MCF 10A (cell line): ENCODE measurements at regions of chr7 and their contacts with region 1.

Region 1: DNA sequence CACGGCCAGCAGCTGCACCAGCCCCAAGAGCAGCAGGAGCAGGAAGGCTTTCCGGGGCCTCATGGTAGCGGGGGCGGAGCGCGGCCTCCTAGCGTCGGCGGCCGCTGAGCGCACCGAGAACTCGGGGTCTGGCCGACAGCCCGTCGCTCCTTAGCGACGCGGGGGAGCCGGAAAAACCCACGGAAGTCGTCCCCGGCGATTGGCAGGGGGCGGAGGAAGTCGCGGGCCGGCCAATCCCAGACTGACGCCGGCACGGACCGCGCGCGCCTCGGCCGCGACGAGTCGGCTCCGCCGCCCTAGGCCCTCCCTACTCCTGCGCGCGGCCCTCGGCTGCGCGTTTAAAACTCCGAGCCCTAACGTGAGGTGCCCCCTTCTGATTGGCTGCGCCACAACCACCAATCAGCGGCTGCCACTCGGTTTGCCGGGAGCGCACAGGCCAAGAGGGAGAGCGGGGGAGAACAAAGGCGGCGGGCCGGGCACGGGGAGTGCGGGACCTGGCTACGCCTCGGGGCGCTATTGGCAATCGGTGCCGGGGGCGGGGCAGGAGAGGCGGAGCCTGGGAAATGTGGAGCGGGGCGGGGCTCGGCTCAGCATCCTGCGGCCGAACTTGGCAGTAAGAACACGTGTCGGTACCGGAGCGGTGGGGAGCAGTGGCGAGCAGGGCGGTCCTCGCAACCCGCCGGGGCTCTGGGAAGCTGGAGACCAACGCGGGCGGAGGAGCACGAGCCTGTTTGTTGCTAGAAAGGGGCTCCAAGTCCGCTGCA is at the start of gene PDIA4:
- DNase-seq: peak; percentile 99
- H3K4me3 Mint-ChIP-seq: peak within 1 kb of the TSS; percentile 94
- H3K27ac Mint-ChIP-seq: peak within 1 kb of the TSS; percentile 95
- H3K4me1 Mint-ChIP-seq: peaks cover 20% of the 10 kb centered on the region
- H3K27me3 Mint-ChIP-seq: no peaks in the 10 kb centered on the region
- CTCF ChIP-seq: no peak
- total RNA-seq, gene PDIA4: 191 and 215 TPM in 2 replicates

Region 2: DNA sequence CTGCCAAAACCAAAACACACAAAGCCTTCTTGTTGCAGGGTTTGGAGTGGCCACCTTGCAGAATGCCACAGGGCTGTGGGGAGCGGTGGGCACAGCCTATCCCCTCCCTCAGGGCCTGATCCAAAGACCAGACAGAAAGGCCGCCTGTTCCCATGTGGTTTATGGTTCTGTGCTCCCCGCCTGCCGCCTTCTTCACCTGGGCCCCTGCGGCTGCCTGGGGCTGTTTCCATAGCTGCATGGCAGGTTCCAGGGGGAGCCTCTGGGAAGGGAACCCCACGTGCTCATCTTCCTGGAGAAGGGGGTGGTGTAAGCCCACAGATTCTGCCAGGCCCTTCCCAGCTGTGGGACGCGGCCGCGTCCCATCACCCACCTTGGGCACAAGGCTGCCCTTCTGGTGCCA is 73.8 kb before region 1 on chr7:
- CTCF ChIA-PET with region 1: no interaction called
- POLR2A ChIA-PET with region 1: no interaction called
- intact Hi-C with region 1: no loop called
- DNase-seq: no peak
- H3K4me3 Mint-ChIP-seq: no peak overlapping the region
- H3K27ac Mint-ChIP-seq: no peak overlapping the region
- H3K4me1 Mint-ChIP-seq: no peaks in the 10 kb centered on the region
- H3K27me3 Mint-ChIP-seq: no peaks in the 10 kb centered on the region
- CTCF ChIP-seq: no peak

Region 3: GRCh38 chr7:148987010-148987750 is 41.3 kb before region 1 on chr7:
- CTCF ChIA-PET with region 1: interaction called, 3 read pairs
- POLR2A ChIA-PET with region 1: interaction called, 20 read pairs
- intact Hi-C with region 1: no loop called
- DNase-seq: peak; percentile 89
- H3K4me3 Mint-ChIP-seq: peak overlapping the region; percentile 92
- H3K27ac Mint-ChIP-seq: peak overlapping the region; percentile 80
- H3K4me1 Mint-ChIP-seq: peaks cover 29% of the 10 kb centered on the region
- H3K27me3 Mint-ChIP-seq: no peaks in the 10 kb centered on the region
- CTCF ChIP-seq: no peak

Region 4: GRCh38 chr7:149016876-149017275 is 11.7 kb before region 1 on chr7:
- CTCF ChIA-PET with region 1: no interaction called
- POLR2A ChIA-PET with region 1: no interaction called
- intact Hi-C with region 1: no loop called
- DNase-seq: no peak
- H3K4me3 Mint-ChIP-seq: no peak overlapping the region
- H3K27ac Mint-ChIP-seq: no peak overlapping the region
- H3K4me1 Mint-ChIP-seq: no peaks in the 10 kb centered on the region
- H3K27me3 Mint-ChIP-seq: no peaks in the 10 kb centered on the region
- CTCF ChIP-seq: no peak

Region 5: GRCh38 chr7:149071641-149072437 is 43.3 kb after region 1 on chr7:
- CTCF ChIA-PET with region 1: interaction called, 21 read pairs
- POLR2A ChIA-PET with region 1: interaction called, 4 read pairs
- intact Hi-C with region 1: no loop called
- DNase-seq: no peak
- H3K4me3 Mint-ChIP-seq: no peak overlapping the region
- H3K27ac Mint-ChIP-seq: no peak overlapping the region
- H3K4me1 Mint-ChIP-seq: peaks cover 6% of the 10 kb centered on the region
- H3K27me3 Mint-ChIP-seq: no peaks in the 10 kb centered on the region
- CTCF ChIP-seq: no peak

Region 6: DNA sequence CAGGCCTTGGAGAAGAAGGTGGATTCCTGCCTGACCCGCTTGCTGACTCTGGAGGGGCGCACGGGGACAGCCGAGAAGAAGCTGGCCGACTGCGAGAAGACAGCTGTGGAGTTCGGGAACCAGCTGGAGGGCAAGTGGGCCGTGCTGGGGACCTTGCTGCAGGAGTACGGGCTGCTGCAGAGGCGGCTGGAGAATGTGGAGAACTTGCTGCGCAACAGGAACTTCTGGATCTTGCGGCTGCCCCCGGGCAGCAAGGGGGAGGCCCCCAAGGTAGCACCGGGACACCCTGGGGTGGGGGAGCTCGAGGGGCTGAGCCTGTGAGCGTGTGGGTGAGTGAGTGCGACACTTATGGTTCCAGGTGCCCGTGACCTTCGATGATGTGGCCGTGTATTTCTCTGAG is 237.9 kb after region 1 on chr7:
- CTCF ChIA-PET with region 1: no interaction called
- POLR2A ChIA-PET with region 1: no interaction called
- intact Hi-C with region 1: no loop called
- DNase-seq: no peak
- H3K4me3 Mint-ChIP-seq: no peak overlapping the region
- H3K27ac Mint-ChIP-seq: no peak overlapping the region
- H3K4me1 Mint-ChIP-seq: peaks cover 7% of the 10 kb centered on the region
- H3K27me3 Mint-ChIP-seq: no peaks in the 10 kb centered on the region
- CTCF ChIP-seq: no peak